Transverse colon (tissue), 4 donors: ENCODE measurements at regions of chr11 and their contacts with region 1.

Region 1: GRCh38 chr11:55673860-55674259 is 11.9 kb downstream of the OR4C6 start:
- DNase-seq: no peak
- H3K4me3 ChIP-seq: no peak overlapping the region
- H3K27ac ChIP-seq: no peak overlapping the region
- H3K4me1 ChIP-seq: no peaks in the 10 kb centered on the region
- H3K27me3 ChIP-seq: no peaks in the 10 kb centered on the region
- CTCF ChIP-seq: no peak
- EP300 ChIP-seq: no peak
- POLR2A ChIP-seq: no peak

Region 2: GRCh38 chr11:55607545-55607944 is 66.3 kb before region 1 on chr11 and contains the start of gene OR4C11:
- in situ Hi-C with region 1: no loop called
- intact Hi-C with region 1: no loop called
- DNase-seq: no peak
- H3K4me3 ChIP-seq: no peak within 1 kb of the TSS
- H3K27ac ChIP-seq: no peak within 1 kb of the TSS
- H3K4me1 ChIP-seq: no peaks in the 10 kb centered on the region
- H3K27me3 ChIP-seq: no peaks in the 10 kb centered on the region
- CTCF ChIP-seq: no peak
- EP300 ChIP-seq: no peak
- POLR2A ChIP-seq: no peak
- total RNA-seq, gene OR4C11: not detected

Region 3: GRCh38 chr11:55648027-55648426 is 25.8 kb before region 1 on chr11 and contains the start of gene OR4S2:
- in situ Hi-C with region 1: no loop called
- intact Hi-C with region 1: loop called (anchors 2 kb)
- DNase-seq: no peak
- H3K4me3 ChIP-seq: no peak within 1 kb of the TSS
- H3K27ac ChIP-seq: no peak within 1 kb of the TSS
- H3K4me1 ChIP-seq: no peaks in the 10 kb centered on the region
- H3K27me3 ChIP-seq: no peaks in the 10 kb centered on the region
- CTCF ChIP-seq: no peak
- EP300 ChIP-seq: no peak
- POLR2A ChIP-seq: no peak
- total RNA-seq, gene OR4S2: not detected

Region 4: DNA sequence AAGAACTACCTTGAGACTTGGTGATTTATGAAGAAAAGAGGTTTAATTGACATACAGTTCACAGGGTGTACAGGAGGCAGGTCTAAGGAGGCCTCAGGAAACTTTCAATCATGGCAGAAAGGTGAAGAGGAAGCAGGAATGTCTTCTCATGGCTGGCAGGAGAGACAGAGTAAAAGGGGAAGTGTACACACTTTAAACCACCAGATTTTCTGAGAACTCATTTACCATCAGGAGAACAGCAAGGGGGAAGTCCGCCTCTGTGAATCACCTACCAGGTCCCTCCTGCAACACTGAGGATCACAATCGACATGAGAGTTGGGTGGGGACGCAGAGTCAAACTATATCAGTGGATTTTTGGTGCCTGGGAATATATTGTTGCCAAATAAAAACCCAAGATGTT is 59.1 kb after region 1 on chr11:
- in situ Hi-C with region 1: loop called in 1 of 4 experiments (anchors 10 kb)
- intact Hi-C with region 1: no loop called
- DNase-seq: no peak
- H3K4me3 ChIP-seq: no peak overlapping the region
- H3K27ac ChIP-seq: no peak overlapping the region
- H3K4me1 ChIP-seq: no peaks in the 10 kb centered on the region
- H3K27me3 ChIP-seq: no peaks in the 10 kb centered on the region
- CTCF ChIP-seq: no peak
- EP300 ChIP-seq: no peak
- POLR2A ChIP-seq: no peak